Ovary (tissue), 10 donors: ENCODE measurements at regions of chr2 and their contacts with region 1.

Region 1: DNA sequence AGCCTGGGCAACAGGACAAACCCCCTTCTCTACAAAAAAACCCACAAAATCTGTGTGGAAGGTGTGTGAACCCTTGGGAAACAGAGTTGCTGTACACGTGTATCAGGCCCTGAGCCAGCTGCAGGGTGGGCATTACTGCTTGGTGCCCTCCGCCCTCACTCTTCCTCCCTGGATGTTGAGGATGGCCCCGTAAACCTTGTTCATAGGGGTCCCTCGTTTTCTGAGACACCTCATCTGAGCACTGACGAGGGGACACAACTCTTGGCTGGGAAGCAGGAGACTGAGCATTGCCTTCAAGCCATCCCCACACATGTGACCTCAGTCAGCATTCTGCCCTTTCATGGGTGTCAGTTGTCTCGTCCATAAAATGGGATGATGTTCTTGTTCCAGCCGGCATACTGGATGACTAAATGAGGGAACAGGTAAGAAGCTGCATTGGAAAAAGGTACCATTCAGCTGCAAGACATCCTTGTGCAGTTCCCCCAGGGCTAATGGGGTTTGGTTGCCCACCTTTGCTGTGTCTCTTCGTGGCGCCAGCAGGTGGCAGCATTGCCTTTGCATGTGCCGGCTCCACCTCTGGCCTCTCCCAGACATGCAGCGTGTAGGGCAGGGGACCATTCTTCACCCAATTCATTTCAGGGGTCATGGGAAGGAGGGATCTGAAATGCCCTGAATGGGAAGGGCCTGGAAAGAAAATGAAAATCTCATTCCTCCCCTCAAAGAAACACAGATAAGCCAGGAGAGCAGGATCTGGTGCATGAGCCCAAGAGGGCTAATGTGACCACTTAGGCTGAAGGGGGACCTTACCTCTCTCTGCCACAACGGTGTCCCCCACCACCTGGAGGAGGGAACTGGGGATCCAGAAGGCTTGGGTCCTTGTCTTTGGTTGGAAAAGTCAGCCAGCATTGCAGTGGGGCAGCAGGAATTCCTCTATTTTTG is 36.4 kb upstream of the HAAO start:
- DNase-seq: peak; percentile 78 to 89 (median 85)
- H3K4me3 ChIP-seq: no peak overlapping the region
- H3K27ac ChIP-seq: peak overlapping the region in 1 of 2 donors; percentile 7
- H3K4me1 ChIP-seq: peaks cover 14% of the 10 kb centered on the region
- H3K27me3 ChIP-seq: no peaks in the 10 kb centered on the region
- CTCF ChIP-seq: peak; percentile 76 to 98 (median 96)
- EP300 ChIP-seq: no peak
- POLR2A ChIP-seq: peak; percentile 17

Region 2: DNA sequence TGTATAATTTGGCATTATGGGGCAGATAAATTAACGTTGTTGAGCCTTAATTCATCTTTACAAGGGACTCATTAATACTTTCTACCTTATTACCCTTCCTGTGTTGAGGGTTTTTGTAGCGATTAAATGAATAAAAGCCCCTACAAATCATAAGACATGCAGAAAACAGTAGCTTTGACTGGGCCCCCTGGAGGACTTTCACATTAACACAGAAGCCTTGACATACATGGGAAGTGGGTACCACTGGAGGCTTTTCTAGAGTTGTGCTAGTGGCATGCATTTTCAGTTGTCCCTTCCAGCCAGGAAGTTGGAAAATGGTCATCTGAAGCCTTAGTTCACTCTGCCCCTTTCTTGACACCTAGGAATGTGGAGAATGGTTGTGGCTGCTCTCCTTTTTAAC is 230.1 kb before region 1 on chr2:
- intact Hi-C with region 1: no loop called
- DNase-seq: no peak
- H3K4me3 ChIP-seq: no peak overlapping the region
- H3K27ac ChIP-seq: no peak overlapping the region
- H3K4me1 ChIP-seq: peaks cover 2% of the 10 kb centered on the region
- H3K27me3 ChIP-seq: no peaks in the 10 kb centered on the region
- CTCF ChIP-seq: no peak
- EP300 ChIP-seq: no peak
- POLR2A ChIP-seq: no peak

Region 3: GRCh38 chr2:42928692-42929545 is 100.2 kb after region 1 on chr2:
- intact Hi-C with region 1: loop called in 2 of 4 experiments (anchors 5 to 10 kb)
- DNase-seq: peak in 1 of 5 donors; percentile 36
- H3K4me3 ChIP-seq: no peak overlapping the region
- H3K27ac ChIP-seq: peak overlapping the region; percentile 49 to 74
- H3K4me1 ChIP-seq: peaks cover 65% of the 10 kb centered on the region
- H3K27me3 ChIP-seq: no peaks in the 10 kb centered on the region
- CTCF ChIP-seq: no peak
- EP300 ChIP-seq: no peak
- POLR2A ChIP-seq: no peak

Region 4: GRCh38 chr2:43024515-43025011 is 195.8 kb after region 1 on chr2:
- intact Hi-C with region 1: loop called in 1 of 4 experiments (anchors 5 kb)
- DNase-seq: peak; percentile 70 to 82 (median 80)
- H3K4me3 ChIP-seq: no peak overlapping the region
- H3K27ac ChIP-seq: peak overlapping the region; percentile 20 to 34
- H3K4me1 ChIP-seq: peaks cover 7% of the 10 kb centered on the region
- H3K27me3 ChIP-seq: no peaks in the 10 kb centered on the region
- CTCF ChIP-seq: peak; percentile 63 to 85 (median 78)
- EP300 ChIP-seq: no peak
- POLR2A ChIP-seq: no peak

Region 5: GRCh38 chr2:43484323-43484930 is 655.7 kb after region 1 on chr2:
- intact Hi-C with region 1: loop called in 2 of 4 experiments (anchors 5 kb)
- DNase-seq: no peak
- H3K4me3 ChIP-seq: no peak overlapping the region
- H3K27ac ChIP-seq: peak overlapping the region in 1 of 2 donors; percentile 49
- H3K4me1 ChIP-seq: peaks cover 4% of the 10 kb centered on the region
- H3K27me3 ChIP-seq: no peaks in the 10 kb centered on the region
- CTCF ChIP-seq: peak; percentile 35 to 91 (median 67)
- EP300 ChIP-seq: no peak
- POLR2A ChIP-seq: no peak

Region 6: DNA sequence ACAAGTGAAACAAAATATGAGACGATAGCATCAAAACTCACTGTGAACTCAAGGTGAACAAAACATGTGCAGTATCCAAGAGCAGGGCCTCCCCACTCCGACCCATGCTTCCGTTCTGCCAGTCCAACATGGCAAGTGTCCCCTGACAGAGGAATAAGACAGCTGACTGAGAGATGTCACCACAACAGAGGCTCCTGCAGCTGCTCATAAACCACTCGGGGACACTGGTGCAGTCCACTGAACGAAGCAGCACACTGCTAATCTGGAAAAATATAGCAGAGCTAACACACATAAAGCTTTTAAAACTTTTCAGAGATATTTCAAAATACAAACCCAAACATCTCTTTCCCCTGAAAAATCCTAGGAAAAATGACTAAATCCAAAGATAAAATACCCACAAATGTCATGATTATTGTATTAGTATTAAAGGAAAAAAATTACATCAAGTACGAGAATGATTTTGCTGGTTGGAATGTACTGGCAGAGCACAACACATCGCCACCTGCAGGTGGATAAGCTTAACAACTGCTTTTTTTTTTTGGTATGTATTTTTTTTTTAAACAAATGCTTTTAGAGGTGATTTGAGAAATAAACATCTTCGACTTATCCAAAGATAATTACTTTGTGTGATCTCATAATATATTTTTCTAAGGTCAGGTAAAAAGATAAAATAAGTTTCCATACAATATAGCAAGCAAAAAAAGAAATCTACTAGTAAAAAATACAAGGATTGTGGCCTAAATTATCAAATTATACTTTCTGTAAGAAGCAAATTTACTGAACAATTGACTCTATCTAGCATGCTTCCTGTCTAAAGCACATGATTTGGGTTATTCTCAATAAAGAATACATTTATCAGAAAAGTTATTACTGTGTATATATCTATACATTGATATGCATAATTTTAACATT is 748.5 kb after region 1 on chr2:
- intact Hi-C with region 1: loop called in 1 of 4 experiments (anchors 10 kb)
- DNase-seq: peak in 3 of 5 donors; percentile 23 to 59 (median 38)
- H3K4me3 ChIP-seq: no peak overlapping the region
- H3K27ac ChIP-seq: no peak overlapping the region
- H3K4me1 ChIP-seq: no peaks in the 10 kb centered on the region
- H3K27me3 ChIP-seq: no peaks in the 10 kb centered on the region
- CTCF ChIP-seq: peak; percentile 53 to 77 (median 72)
- EP300 ChIP-seq: no peak
- POLR2A ChIP-seq: no peak